ENCODE measurements at regions of chr19 and their contacts with region 1.

Region 1: GRCh38 chr19:45455707-45456499 is 11.9 kb upstream of the FOSB start:
- DNase-seq: peak; percentile 89
- ATAC-seq: peak; percentile 89
- H3K4me3 ChIP-seq: peak overlapping the region in 2 of 3 experiments; percentile 45 to 71; a peak in 4 of 6 replicates
- H3K27ac ChIP-seq: peak overlapping the region; percentile 42
- H3K4me1 ChIP-seq: peaks cover 77% of the 10 kb centered on the region
- H3K27me3 ChIP-seq: peaks cover 0 to 16% of the 10 kb centered on the region in 2 experiments; a peak in 4 of 5 replicates
- CTCF ChIP-seq: no peak
- EP300 ChIP-seq: peak; percentile 39 to 47; a peak in 1 of 4 replicates
- POLR2A ChIP-seq: no peak; a peak in 2 of 4 replicates
- RAD21 ChIP-seq: no peak

Region 2: DNA sequence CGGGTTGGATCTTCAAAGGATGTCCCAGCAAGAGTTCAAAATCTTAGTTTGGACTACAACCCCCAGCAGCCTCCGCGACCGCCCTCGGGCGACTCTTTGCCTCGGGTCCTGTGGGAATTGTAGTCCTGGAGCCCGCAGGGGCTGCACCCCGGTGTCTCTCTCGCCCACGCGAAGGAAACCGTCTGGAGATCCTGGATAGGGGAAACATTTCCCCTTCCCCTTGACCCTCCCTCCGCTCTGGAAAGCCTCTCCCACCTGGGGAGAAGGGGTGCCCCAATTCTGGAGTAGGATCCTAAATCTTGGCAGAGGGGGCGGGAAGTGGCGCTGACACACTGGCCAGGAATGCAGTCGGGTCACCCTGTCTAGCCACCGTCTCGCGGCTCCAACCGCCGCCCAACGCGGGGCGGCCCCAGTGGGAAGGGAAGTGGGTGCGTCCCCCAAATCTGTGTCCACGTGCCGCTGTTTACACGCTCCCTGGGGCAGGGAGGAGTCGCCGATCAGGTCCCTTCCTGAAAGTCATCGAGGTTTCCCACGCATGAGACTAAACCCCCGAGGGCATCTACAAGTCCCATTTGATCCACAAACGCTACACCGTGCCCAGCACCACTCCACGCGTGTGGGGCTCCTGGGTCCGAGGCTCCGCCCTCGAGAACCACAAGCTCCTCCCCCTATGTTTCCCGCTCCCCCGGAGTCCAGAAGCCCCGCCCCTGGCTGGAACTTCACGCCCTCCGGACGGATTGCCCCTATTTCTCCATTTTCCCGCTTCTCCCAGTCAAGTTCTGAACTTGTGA is 50.3 kb before region 1 on chr19:
- CTCF ChIA-PET with region 1: no interaction called
- POLR2A ChIA-PET with region 1: no interaction called
- in situ Hi-C with region 1: no loop called
- intact Hi-C with region 1: no loop called
- DNase-seq: peak; percentile 81
- ATAC-seq: peak; percentile 81
- H3K4me3 ChIP-seq: peak overlapping the region; percentile 75 to 84 (median 84)
- H3K27ac ChIP-seq: peak overlapping the region; percentile 92
- H3K4me1 ChIP-seq: peaks cover 29% of the 10 kb centered on the region
- H3K27me3 ChIP-seq: no peaks in the 10 kb centered on the region; a peak in 1 of 5 replicates
- CTCF ChIP-seq: no peak
- EP300 ChIP-seq: 0 out of 4 replicates have a peak, but pooled peaks of 1 of the 2 experiments have one; percentile 3
- POLR2A ChIP-seq: peak; percentile 48 to 76; a peak in 2 of 4 replicates
- RAD21 ChIP-seq: 0 out of 2 replicates have a peak, but pooled peaks have one; percentile 4

Region 3: DNA sequence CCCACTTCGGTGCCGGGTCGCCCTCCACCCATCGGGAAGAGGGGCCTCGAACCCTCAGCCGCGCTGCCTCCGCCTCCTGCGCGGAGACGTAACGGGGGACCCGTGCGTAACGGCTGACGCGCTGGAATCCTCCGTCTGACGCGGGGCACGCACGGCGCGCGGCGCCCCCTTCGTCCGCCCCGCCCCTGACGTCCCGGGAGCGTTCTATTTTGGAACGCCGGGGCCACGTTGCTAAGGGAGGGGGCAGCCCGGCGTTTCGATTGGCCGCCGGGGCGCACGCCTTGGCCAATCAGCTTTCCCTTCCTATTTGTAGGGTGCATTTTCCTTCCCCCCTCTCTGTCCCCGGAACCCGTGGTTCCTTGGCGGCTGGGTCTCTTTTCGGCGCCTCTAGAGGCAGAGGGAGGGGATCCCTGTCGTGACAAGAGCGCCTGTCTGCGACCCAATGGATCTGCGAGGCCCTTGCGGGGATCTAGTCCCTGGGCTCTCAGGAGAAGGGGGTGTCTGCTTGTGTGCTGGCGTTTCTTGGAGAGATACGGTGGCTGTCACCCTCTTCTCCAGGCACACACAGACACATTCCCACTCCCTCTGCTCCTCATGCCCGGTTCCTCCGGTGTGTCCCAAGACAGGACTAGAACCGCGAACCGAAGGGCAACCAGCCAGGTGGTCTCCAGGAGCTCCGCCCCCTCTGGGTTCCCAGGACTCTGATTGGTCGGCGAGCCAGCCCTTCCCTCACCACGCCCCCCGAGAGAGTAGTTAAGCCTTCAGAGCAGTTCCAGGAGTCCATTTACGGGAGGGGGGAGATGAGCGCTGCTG is 13.4 kb after region 1 on chr19:
- CTCF ChIA-PET with region 1: no interaction called
- POLR2A ChIA-PET with region 1: interaction called, 22 read pairs
- in situ Hi-C with region 1: no loop called
- intact Hi-C with region 1: loop called (anchors 2 kb)
- DNase-seq: peak; percentile 87
- ATAC-seq: peak; percentile 76
- H3K4me3 ChIP-seq: peak overlapping the region; percentile 76 to 91 (median 89)
- H3K27ac ChIP-seq: peak overlapping the region; percentile 96
- H3K4me1 ChIP-seq: peaks cover 28% of the 10 kb centered on the region
- H3K27me3 ChIP-seq: peaks cover 0 to 3% of the 10 kb centered on the region in 2 experiments; a peak in 2 of 5 replicates
- CTCF ChIP-seq: peak; percentile 41; the same call in 1 of the 2 replicates
- EP300 ChIP-seq: no peak
- POLR2A ChIP-seq: peak; percentile 64 to 91
- RAD21 ChIP-seq: 0 out of 2 replicates have a peak, but pooled peaks have one; percentile 13

Region 4: GRCh38 chr19:45485305-45486077 is 29.6 kb after region 1 on chr19:
- CTCF ChIA-PET with region 1: no interaction called
- POLR2A ChIA-PET with region 1: no interaction called
- in situ Hi-C with region 1: no loop called
- intact Hi-C with region 1: no loop called
- DNase-seq: peak; percentile 93
- ATAC-seq: peak; percentile 97
- H3K4me3 ChIP-seq: peak overlapping the region; percentile 66 to 88 (median 76)
- H3K27ac ChIP-seq: peak overlapping the region; percentile 36
- H3K4me1 ChIP-seq: peaks cover 25% of the 10 kb centered on the region
- H3K27me3 ChIP-seq: peaks cover 0 to 6% of the 10 kb centered on the region in 2 experiments; a peak in 2 of 5 replicates
- CTCF ChIP-seq: peak; percentile 89
- EP300 ChIP-seq: peak in 1 of 2 experiments; percentile 4; a peak in 1 of 4 replicates
- POLR2A ChIP-seq: no peak
- RAD21 ChIP-seq: peak; percentile 29; the same call in 1 of the 2 replicates

Region 5: GRCh38 chr19:45523642-45524256 is 67.8 kb after region 1 on chr19:
- CTCF ChIA-PET with region 1: no interaction called
- POLR2A ChIA-PET with region 1: no interaction called
- in situ Hi-C with region 1: no loop called
- intact Hi-C with region 1: no loop called
- DNase-seq: peak; percentile 82
- ATAC-seq: peak; percentile 92
- H3K4me3 ChIP-seq: no peak overlapping the region
- H3K27ac ChIP-seq: no peak overlapping the region
- H3K4me1 ChIP-seq: peaks cover under 1% of the 10 kb centered on the region; the same call in 1 of the 2 replicates
- H3K27me3 ChIP-seq: no peaks in the 10 kb centered on the region
- CTCF ChIP-seq: peak; percentile 92
- EP300 ChIP-seq: no peak
- POLR2A ChIP-seq: no peak
- RAD21 ChIP-seq: peak; percentile 88

Measured in HepG2 (cell line).